Breast epithelium (tissue), 4 donors: ENCODE measurements at regions of chr6 and their contacts with region 1.

Region 1: DNA sequence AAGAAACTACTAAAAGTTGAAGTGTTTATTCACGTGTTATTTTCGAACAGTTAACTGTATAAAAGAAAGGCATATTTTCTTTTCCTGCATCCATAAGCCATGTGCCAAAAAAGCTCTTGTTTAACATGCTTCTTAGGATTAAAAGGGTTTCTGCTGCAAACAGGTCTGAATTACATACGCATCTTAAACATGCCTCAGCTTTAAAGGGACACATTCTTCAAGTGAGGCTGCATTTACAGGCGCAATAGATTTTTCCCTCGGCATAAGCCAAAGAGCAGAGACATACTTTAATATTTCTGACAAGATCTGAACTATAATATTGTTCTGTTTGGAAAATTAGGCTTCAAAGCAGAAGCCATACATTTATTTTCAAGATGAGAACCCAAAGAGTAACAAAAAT is 39.4 kb downstream of the PDE7B start:
- DNase-seq: no peak
- H3K4me3 ChIP-seq: no peak overlapping the region
- H3K27ac ChIP-seq: no peak overlapping the region
- H3K4me1 ChIP-seq: no peaks in the 10 kb centered on the region
- H3K27me3 ChIP-seq: no peaks in the 10 kb centered on the region
- CTCF ChIP-seq: no peak
- POLR2A ChIP-seq: no peak

Region 2: DNA sequence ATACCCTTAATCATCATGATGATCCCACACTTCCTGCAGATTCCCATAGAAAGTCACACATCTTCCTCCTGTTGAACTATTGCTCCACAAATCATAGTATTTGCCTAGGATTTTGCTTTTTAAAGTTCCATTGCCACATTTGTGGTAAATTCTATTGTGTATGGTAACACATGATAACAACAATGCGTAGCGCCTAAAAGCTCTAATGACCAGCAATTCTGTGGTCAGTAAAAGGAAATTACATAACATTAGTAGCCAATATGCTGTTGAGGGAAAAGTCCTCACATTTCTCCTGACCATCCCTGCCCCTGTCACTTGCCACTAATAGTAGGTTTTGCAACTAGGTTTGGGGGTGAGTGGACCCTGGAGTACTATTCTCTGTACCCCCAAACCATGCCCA is 71.2 kb before region 1 on chr6:
- intact Hi-C with region 1: no loop called
- DNase-seq: no peak
- H3K4me3 ChIP-seq: no peak overlapping the region
- H3K27ac ChIP-seq: no peak overlapping the region
- H3K4me1 ChIP-seq: no peaks in the 10 kb centered on the region
- H3K27me3 ChIP-seq: no peaks in the 10 kb centered on the region
- CTCF ChIP-seq: no peak
- POLR2A ChIP-seq: no peak

Region 3: GRCh38 chr6:135902756-135903331 is 12.0 kb after region 1 on chr6:
- intact Hi-C with region 1: loop called (anchors 1 kb)
- DNase-seq: no peak
- H3K4me3 ChIP-seq: peak overlapping the region in 1 of 3 donors; percentile 26
- H3K27ac ChIP-seq: peak overlapping the region; percentile 1 to 68
- H3K4me1 ChIP-seq: no peaks in the 10 kb centered on the region
- H3K27me3 ChIP-seq: no peaks in the 10 kb centered on the region
- CTCF ChIP-seq: no peak
- POLR2A ChIP-seq: no peak

Region 4: GRCh38 chr6:135922174-135922573 is 31.3 kb after region 1 on chr6:
- intact Hi-C with region 1: no loop called
- DNase-seq: no peak
- H3K4me3 ChIP-seq: no peak overlapping the region
- H3K27ac ChIP-seq: peak overlapping the region in 1 of 2 donors; percentile 5
- H3K4me1 ChIP-seq: no peaks in the 10 kb centered on the region
- H3K27me3 ChIP-seq: no peaks in the 10 kb centered on the region
- CTCF ChIP-seq: no peak
- POLR2A ChIP-seq: no peak